ENCODE measurements at regions of chr10 and their contacts with region 1.

Region 1: DNA sequence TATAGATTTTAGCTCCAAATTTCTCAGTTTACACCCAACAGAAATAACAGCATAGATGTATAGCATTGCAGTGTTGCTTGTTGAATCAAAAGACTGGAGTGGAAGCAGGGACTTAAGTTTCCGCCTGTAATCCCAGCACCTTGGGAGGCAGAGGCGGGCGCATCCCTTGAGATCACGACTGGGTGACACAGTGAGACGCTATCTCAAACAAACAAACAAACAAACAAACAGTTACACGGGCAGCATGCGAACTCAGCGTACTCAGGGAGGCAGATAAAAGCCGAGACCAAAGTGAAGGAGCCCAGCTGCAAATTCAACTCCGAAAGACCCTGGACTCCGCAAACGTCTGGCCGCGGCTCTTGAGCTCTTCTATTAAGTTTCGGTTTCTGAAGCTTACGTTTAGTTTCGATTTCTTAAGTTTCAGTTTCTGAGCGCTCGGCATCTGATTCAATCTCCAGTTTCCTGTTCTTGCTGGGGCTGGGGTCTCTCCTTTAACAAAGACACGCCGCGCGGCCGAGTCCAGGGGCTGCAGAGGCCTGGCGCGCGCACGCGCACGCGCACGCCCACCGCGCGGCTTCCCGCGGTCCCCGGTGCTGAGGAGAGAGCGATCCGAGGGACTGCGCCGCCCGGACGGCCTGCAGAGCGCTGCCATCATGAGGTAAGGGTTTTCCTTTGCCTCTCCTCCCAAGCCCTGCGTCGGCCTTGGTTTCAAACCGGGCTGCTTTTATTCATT is at the start of gene IFIT5:
- DNase-seq: peak; percentile 44 to 80 (median 62)
- ATAC-seq: peak; percentile 82 to 85 (median 83)
- H3K4me3 ChIP-seq: peak within 1 kb of the TSS; percentile 88 to 98
- H3K4me3 Mint-ChIP-seq: peak within 1 kb of the TSS; percentile 90 to 97 (median 92)
- H3K27ac ChIP-seq: peak within 1 kb of the TSS; percentile 97
- H3K27ac Mint-ChIP-seq: peak within 1 kb of the TSS; percentile 96 to 98
- H3K4me1 ChIP-seq: peaks cover 12 to 37% of the 10 kb centered on the region in 2 experiments
- H3K4me1 Mint-ChIP-seq: peaks cover 57 to 65% (median 60%) of the 10 kb centered on the region in 3 donors
- H3K27me3 ChIP-seq: no peaks in the 10 kb centered on the region
- H3K27me3 Mint-ChIP-seq: no peaks in the 10 kb centered on the region
- total RNA-seq, gene IFIT5: 12.6 to 20.3 (median 18.5) TPM

Region 2: DNA sequence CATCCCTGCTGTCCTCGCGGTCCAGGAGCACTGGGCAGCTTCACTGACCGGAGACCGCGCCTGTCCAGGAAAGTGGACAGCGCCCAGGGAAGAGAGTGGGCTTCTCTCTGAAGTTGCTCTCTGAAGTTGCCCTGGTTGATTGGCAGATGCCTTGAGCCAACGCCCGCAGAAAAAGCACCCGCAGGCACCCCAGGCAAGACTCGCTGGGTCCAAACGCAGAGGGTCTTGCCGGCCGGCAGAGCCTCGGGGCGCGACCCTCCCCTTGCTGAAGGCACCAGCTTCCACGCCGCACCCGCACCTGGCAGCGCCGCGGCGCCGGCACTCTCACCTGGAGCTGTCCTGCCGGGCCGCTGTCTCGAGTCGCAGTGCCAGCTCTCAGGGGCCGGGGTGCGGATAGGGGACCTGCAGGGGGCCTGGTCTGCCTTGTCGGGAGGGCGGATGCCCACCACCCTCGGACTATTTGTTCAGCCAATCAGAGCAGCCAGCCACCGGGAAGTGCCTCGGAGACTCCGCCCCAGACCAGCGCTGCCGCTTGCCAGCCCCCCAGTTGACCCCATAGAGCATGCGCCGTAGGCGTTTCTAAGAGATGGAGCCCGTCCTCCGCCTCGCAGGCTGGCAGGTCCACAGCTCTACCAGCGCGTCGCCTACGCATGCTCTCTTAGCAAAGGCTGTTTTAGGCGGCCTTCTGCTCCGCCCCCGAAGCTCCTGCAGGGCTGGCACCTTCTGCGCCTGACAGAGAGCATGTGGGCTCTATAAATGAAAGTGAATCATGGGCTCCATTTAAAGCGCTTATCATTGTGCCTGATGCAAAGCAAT is 162.7 kb before region 1 on chr10 and contains the start of gene LIPA:
- CTCF ChIA-PET with region 1: interaction called in 1 of 2 experiments, 13 read pairs
- POLR2A ChIA-PET with region 1: interaction called in 1 of 2 experiments, 6 read pairs
- DNase-seq: peak; percentile 81 to 98 (median 94)
- ATAC-seq: peak; percentile 94 to 96 (median 94)
- H3K4me3 ChIP-seq: peak within 1 kb of the TSS; percentile 73 to 89
- H3K4me3 Mint-ChIP-seq: peak within 1 kb of the TSS; percentile 73 to 87 (median 86)
- H3K27ac ChIP-seq: peak within 1 kb of the TSS; percentile 71
- H3K27ac Mint-ChIP-seq: peak within 1 kb of the TSS; percentile 61 to 71
- H3K4me1 ChIP-seq: peaks cover 7 to 14% of the 10 kb centered on the region in 2 experiments
- H3K4me1 Mint-ChIP-seq: peaks cover 23 to 25% (median 23%) of the 10 kb centered on the region in 3 donors
- H3K27me3 ChIP-seq: no peaks in the 10 kb centered on the region
- H3K27me3 Mint-ChIP-seq: no peaks in the 10 kb centered on the region
- total RNA-seq, gene LIPA: 23.2 to 38.2 (median 33.6) TPM

Region 3: GRCh38 chr10:89391917-89392756 is 22.2 kb before region 1 on chr10 and contains the start of gene IFIT1:
- CTCF ChIA-PET with region 1: interaction called, 4 to 29 read pairs
- POLR2A ChIA-PET with region 1: interaction called, 12 to 37 read pairs
- DNase-seq: peak in 33 of 35 experiments; percentile 11 to 88 (median 39)
- ATAC-seq: peak; percentile 93 to 96 (median 94)
- H3K4me3 ChIP-seq: peak within 1 kb of the TSS; percentile 78 to 79
- H3K4me3 Mint-ChIP-seq: peak within 1 kb of the TSS; percentile 80 to 90 (median 83)
- H3K27ac ChIP-seq: peak within 1 kb of the TSS; percentile 91
- H3K27ac Mint-ChIP-seq: peak within 1 kb of the TSS; percentile 90 to 94
- H3K4me1 ChIP-seq: peaks cover 10 to 15% of the 10 kb centered on the region in 2 experiments
- H3K4me1 Mint-ChIP-seq: peaks cover 26 to 52% (median 43%) of the 10 kb centered on the region in 3 donors
- H3K27me3 ChIP-seq: no peaks in the 10 kb centered on the region
- H3K27me3 Mint-ChIP-seq: no peaks in the 10 kb centered on the region
- total RNA-seq, gene IFIT1: 1.7 to 5.5 (median 3.0) TPM

Region 4: DNA sequence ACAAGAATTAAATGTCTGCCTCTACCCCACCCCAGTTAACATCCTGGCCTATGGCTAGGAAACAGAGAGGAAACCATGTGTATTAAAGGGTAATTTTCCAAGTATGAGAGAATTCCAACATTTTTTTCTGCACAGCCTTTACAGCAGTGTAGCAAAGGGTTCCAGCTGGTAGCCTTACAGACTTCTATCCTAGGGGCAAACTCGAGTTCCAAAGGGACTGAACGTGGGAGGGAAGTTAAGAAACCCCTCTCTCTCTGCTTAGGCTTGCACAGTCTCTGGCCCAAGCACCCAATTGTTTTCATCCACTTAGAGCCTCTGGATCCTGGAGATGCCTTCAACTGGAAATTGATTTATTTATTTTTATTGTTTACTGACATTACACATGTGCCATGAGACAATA is 60.8 kb after region 1 on chr10:
- CTCF ChIA-PET with region 1: no interaction called
- POLR2A ChIA-PET with region 1: no interaction called
- DNase-seq: no peak
- ATAC-seq: no peak
- H3K4me3 ChIP-seq: no peak overlapping the region
- H3K4me3 Mint-ChIP-seq: no peak overlapping the region
- H3K27ac ChIP-seq: no peak overlapping the region
- H3K27ac Mint-ChIP-seq: no peak overlapping the region
- H3K4me1 ChIP-seq: no peaks in the 10 kb centered on the region
- H3K4me1 Mint-ChIP-seq: peaks cover 0 to 3% (median 0%) of the 10 kb centered on the region in 3 donors
- H3K27me3 ChIP-seq: peaks cover 0 to 6% of the 10 kb centered on the region in 2 experiments
- H3K27me3 Mint-ChIP-seq: peaks cover 1 to 11% of the 10 kb centered on the region in 2 donors

Region 5: DNA sequence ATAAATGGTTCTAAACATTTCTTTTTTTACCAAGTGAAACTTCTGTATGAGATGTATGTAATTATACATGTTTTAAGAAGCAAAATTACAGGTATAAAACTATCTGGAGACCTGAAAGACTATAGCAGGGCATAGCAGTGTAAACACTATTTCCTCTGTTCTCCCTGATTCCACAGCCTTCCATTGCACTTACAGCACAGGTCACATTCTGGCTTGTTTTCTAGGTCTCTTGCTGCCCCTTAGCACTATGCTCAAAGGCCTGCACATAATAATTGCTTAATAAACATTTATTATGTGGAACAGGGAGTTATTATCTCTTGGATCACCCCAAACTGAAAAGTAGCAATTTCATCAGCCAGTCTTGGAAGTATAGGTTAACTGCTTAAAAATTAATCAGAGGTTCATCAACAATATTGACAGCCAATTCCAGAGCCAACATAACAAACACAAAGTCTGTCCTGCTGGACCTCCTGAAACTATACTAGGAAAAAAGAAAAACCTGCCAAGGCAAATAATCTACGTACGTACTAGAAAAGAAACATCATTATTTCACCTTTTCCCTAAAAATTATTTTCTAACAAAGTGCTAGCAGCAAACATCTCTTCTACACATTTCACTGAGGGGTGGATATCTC is 187.5 kb after region 1 on chr10:
- CTCF ChIA-PET with region 1: no interaction called
- POLR2A ChIA-PET with region 1: interaction called in 1 of 2 experiments, 10 read pairs
- DNase-seq: no peak
- ATAC-seq: no peak
- H3K4me3 ChIP-seq: no peak overlapping the region
- H3K4me3 Mint-ChIP-seq: no peak overlapping the region
- H3K27ac ChIP-seq: no peak overlapping the region
- H3K27ac Mint-ChIP-seq: no peak overlapping the region
- H3K4me1 ChIP-seq: no peaks in the 10 kb centered on the region
- H3K4me1 Mint-ChIP-seq: no peaks in the 10 kb centered on the region
- H3K27me3 ChIP-seq: no peaks in the 10 kb centered on the region
- H3K27me3 Mint-ChIP-seq: no peaks in the 10 kb centered on the region

Measured in T-cell (primary cell).